Sigmoid colon (tissue), 7 donors: ENCODE measurements at regions of chr4 and their contacts with region 1.

Region 1: DNA sequence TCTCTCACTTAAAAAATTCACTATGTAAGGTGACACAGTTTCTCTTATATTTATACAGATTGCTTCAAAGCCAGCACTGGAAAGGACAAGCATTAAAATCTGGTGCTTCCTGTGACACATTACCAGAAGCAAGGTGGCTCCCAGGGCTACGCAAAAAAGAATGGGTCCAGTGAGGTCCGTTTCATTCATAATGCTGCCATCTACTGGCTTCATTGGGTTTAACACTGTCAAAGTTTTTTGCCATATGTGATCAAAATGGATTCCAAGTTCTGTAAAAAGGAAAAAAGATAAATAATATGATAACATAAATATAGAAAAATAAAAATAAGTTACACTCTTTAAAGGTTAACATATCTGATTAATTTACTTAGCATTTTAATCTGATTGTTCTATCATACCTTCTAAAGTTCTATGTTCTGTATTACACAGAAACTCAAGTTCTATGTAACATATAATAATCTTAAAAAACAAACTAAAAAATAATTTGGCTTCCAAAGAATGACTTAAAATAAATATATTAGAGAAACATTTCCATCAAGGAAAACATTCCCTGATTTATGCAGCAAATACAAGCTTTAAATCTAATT is 22.1 kb downstream of the YIPF7 start:
- DNase-seq: no peak
- H3K4me3 ChIP-seq: no peak overlapping the region
- H3K27ac ChIP-seq: no peak overlapping the region
- H3K4me1 ChIP-seq: peaks cover 0 to 5% (median 1%) of the 10 kb centered on the region in 4 donors
- H3K27me3 ChIP-seq: no peaks in the 10 kb centered on the region
- CTCF ChIP-seq: peak in 3 of 4 experiments; percentile 23 to 59 (median 31)
- EP300 ChIP-seq: no peak
- POLR2A ChIP-seq: no peak

Region 2: DNA sequence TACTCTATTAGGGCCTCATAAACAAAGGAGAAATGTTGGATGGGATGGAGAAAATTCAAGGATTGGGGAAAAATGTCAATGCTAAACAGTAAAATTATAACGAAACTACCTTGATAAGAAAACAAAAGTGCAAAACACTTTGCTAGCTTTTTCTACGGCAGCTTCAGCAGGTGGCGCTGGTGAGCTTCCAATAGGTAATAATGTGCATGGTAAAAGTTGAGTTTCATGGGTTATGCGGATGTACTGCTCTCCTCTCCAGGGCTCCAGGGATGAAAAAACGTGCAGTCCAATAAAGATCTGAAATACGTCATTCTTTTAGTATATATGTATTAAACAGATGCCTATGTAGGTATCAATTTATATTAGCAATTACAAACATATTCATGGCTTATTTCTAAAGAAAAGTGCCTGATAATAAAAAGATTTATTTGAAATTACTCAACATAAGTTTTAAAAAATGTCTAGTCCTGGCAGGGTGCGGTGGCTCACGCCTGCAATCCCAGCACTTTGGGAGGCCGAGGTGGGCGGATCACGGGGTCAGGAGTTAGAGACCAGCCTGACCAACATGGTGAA is 1497.3 kb before region 1 on chr4:
- intact Hi-C with region 1: loop called (anchors 5 kb)
- DNase-seq: no peak
- H3K4me3 ChIP-seq: no peak overlapping the region
- H3K27ac ChIP-seq: no peak overlapping the region
- H3K4me1 ChIP-seq: no peaks in the 10 kb centered on the region
- H3K27me3 ChIP-seq: no peaks in the 10 kb centered on the region
- CTCF ChIP-seq: peak in 2 of 4 experiments; percentile 32 to 48
- EP300 ChIP-seq: no peak
- POLR2A ChIP-seq: no peak

Region 3: GRCh38 chr4:44448548-44449461 is 180.6 kb before region 1 on chr4 and contains the start of gene KCTD8:
- intact Hi-C with region 1: loop called (anchors 2 kb)
- DNase-seq: peak; percentile 95
- H3K4me3 ChIP-seq: peak within 1 kb of the TSS; percentile 38 to 66 (median 65)
- H3K27ac ChIP-seq: peak within 1 kb of the TSS; percentile 87 to 90 (median 88)
- H3K4me1 ChIP-seq: peaks cover 0 to 20% (median 10%) of the 10 kb centered on the region in 4 donors
- H3K27me3 ChIP-seq: peaks cover 0 to 17% (median 0%) of the 10 kb centered on the region in 3 donors
- CTCF ChIP-seq: peak; percentile 16 to 77 (median 44)
- EP300 ChIP-seq: no peak
- POLR2A ChIP-seq: no peak
- total RNA-seq, gene KCTD8: 1.4 to 2.7 (median 2.0) TPM